ENCODE measurements at regions of chr14 and their contacts with region 1.

Region 1: GRCh38 chr14:36553656-36554260 is 28.7 kb downstream of the NKX2-8 start:
- DNase-seq: peak; percentile 18 to 36
- H3K4me3 ChIP-seq: no peak overlapping the region
- H3K27ac ChIP-seq: no peak overlapping the region
- H3K4me1 ChIP-seq: no peaks in the 10 kb centered on the region
- H3K27me3 ChIP-seq: no peaks in the 10 kb centered on the region
- CTCF ChIP-seq: peak; percentile 65

Region 2: GRCh38 chr14:36320200-36320896 is 233.4 kb before region 1 on chr14 and contains the start of gene MBIP:
- CTCF ChIA-PET with region 1: no interaction called
- POLR2A ChIA-PET with region 1: interaction called, 11 read pairs
- intact Hi-C with region 1: no loop called
- DNase-seq: peak; percentile 71 to 86
- H3K4me3 ChIP-seq: peak within 1 kb of the TSS; percentile 90
- H3K27ac ChIP-seq: peak within 1 kb of the TSS; percentile 21; the same call in 1 of the 2 replicates
- H3K4me1 ChIP-seq: peaks cover 24% of the 10 kb centered on the region
- H3K27me3 ChIP-seq: no peaks in the 10 kb centered on the region
- CTCF ChIP-seq: no peak
- total RNA-seq, gene MBIP: 13.8 and 15.2 TPM in 2 replicates

Region 3: GRCh38 chr14:36361210-36361853 is 192.4 kb before region 1 on chr14:
- CTCF ChIA-PET with region 1: interaction called, 10 read pairs
- POLR2A ChIA-PET with region 1: no interaction called
- intact Hi-C with region 1: no loop called
- DNase-seq: no peak
- H3K4me3 ChIP-seq: no peak overlapping the region
- H3K27ac ChIP-seq: no peak overlapping the region
- H3K4me1 ChIP-seq: no peaks in the 10 kb centered on the region
- H3K27me3 ChIP-seq: no peaks in the 10 kb centered on the region
- CTCF ChIP-seq: no peak

Region 4: GRCh38 chr14:36529062-36529461 is 24.7 kb before region 1 on chr14:
- CTCF ChIA-PET with region 1: no interaction called
- POLR2A ChIA-PET with region 1: no interaction called
- intact Hi-C with region 1: no loop called
- DNase-seq: no peak
- H3K4me3 ChIP-seq: no peak overlapping the region
- H3K27ac ChIP-seq: no peak overlapping the region
- H3K4me1 ChIP-seq: no peaks in the 10 kb centered on the region
- H3K27me3 ChIP-seq: peaks cover 3% of the 10 kb centered on the region; the same call in 1 of the 2 replicates
- CTCF ChIP-seq: no peak

Region 5: DNA sequence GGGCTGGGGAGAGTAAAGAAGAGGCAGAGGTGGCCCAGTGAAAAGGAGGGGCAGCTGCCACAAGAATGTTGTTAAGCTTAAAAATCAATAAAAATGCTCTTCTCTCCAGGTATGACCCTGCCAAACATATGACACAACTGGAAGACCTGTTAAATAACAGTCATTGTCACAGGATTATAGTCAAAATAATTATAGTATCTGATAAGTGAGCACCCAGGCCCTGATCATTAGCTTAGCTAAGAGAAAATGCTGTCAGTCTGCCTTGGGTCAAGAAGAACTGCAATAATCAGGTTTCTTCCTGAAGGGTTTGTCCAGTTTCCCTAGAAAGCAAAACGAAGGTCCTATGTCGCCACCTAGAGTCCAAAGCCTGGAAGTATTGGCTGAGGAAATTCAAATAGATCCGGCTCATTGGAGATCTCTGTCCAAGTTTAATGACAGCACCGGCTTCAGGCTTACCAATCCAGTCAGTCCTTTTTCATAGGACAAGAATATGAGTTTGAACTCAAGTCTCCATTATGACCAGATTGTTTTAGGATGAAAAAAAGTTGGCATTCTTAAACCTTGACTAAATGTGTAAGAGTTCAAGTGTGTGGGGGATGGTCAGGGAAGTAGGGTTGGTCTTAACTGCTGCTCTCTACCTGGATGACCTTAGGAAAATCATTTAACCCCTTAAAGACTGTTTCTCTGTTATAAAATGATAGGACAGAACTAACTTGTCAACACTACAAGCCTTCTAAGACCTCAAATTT is 51.2 kb after region 1 on chr14:
- CTCF ChIA-PET with region 1: interaction called, 5 read pairs
- POLR2A ChIA-PET with region 1: no interaction called
- intact Hi-C with region 1: loop called (anchors 2 kb)
- DNase-seq: peak; percentile 51 to 64
- H3K4me3 ChIP-seq: no peak overlapping the region
- H3K27ac ChIP-seq: no peak overlapping the region
- H3K4me1 ChIP-seq: no peaks in the 10 kb centered on the region
- H3K27me3 ChIP-seq: no peaks in the 10 kb centered on the region
- CTCF ChIP-seq: peak; percentile 73

Region 6: DNA sequence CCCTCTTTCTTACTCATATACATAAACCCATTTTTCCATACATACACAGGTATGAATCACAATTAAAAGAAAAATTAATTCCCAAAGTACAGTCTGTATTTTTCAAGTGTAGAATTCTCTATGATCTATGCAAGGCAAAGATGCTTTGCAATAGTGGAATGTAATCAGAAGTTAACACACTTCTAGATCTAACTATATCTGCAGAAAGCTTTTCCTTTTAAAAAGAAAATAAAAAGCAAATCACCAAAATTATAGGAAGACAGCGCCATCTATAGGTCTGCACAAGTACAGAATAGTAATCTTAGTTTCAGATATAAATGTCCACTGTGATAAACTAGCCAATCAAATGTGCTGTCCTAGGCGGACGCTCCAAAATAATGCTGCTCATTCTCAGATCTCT is 596.7 kb after region 1 on chr14:
- CTCF ChIA-PET with region 1: interaction called, 3 read pairs
- POLR2A ChIA-PET with region 1: no interaction called
- intact Hi-C with region 1: loop called (anchors 1 kb)
- DNase-seq: no peak
- H3K4me3 ChIP-seq: no peak overlapping the region
- H3K27ac ChIP-seq: no peak overlapping the region
- H3K4me1 ChIP-seq: no peaks in the 10 kb centered on the region
- H3K27me3 ChIP-seq: no peaks in the 10 kb centered on the region
- CTCF ChIP-seq: peak; percentile 79